ENCODE measurements at regions of chr12 and their contacts with region 1.

Region 1: DNA sequence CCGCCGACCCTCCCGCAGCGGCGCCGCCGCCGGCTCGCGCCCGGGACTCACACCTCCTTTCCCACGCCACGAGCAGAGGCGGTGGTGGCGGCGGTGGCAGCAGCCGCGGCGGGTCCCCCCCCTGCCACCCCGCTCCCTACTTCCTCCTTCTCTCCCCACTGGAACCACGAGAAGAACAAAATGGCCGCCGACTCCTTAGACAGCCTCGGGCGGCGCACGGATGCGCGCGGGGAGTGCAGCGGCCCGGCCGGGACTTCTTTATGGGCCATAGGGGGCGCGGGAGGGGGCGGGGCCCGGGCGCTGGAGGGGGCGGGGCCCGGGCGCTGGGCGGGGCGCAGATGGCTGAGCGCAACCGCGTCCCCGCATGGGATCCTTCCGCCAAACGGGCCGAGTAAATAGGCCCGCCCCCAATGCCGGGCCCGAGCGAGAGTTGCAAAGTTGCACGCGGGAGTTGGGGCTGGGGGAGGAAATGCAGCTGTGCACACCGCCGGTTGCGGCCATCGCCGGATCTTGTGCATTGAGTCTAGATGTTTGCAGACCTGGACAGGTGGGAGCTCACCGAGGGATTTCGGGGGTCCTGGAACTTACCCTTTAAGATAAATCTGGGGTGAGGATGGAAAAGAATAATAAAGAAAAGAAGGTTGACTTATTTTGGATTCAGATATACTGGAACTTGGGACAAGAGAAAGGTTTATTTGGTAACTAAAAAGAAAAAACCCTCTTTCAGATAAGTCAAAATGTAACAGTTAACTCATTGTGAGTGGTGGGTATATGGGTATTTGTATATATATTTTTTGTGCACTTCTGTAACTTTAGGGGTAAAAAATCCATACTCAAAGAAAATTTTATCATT is at the start of gene PPP1CC:
- DNase-seq: peak; percentile 97
- H3K4me3 ChIP-seq: peak within 1 kb of the TSS; percentile 86 to 94 (median 94)
- H3K27ac ChIP-seq: peak within 1 kb of the TSS; percentile 91 to 94 (median 94)
- H3K4me1 ChIP-seq: peaks cover 0 to 60% (median 44%) of the 10 kb centered on the region in 4 donors
- H3K27me3 ChIP-seq: no peaks in the 10 kb centered on the region
- CTCF ChIP-seq: no peak
- EP300 ChIP-seq: no peak
- POLR2A ChIP-seq: peak; percentile 68 to 81
- total RNA-seq, gene PPP1CC: 140 to 208 (median 171) TPM

Region 2: GRCh38 chr12:110555577-110556406 is 187.2 kb before region 1 on chr12:
- intact Hi-C with region 1: no loop called
- DNase-seq: no peak
- H3K4me3 ChIP-seq: no peak overlapping the region
- H3K27ac ChIP-seq: peak overlapping the region; percentile 40 to 59 (median 56)
- H3K4me1 ChIP-seq: peaks cover 0 to 60% (median 50%) of the 10 kb centered on the region in 4 donors
- H3K27me3 ChIP-seq: no peaks in the 10 kb centered on the region
- CTCF ChIP-seq: no peak
- EP300 ChIP-seq: no peak
- POLR2A ChIP-seq: no peak

Region 3: GRCh38 chr12:110880648-110881047 is 137.7 kb after region 1 on chr12:
- intact Hi-C with region 1: loop called (anchors 2 kb)
- DNase-seq: no peak
- H3K4me3 ChIP-seq: no peak overlapping the region
- H3K27ac ChIP-seq: no peak overlapping the region
- H3K4me1 ChIP-seq: peaks cover 0 to 13% (median 5%) of the 10 kb centered on the region in 4 donors
- H3K27me3 ChIP-seq: no peaks in the 10 kb centered on the region
- CTCF ChIP-seq: no peak
- EP300 ChIP-seq: no peak
- POLR2A ChIP-seq: no peak